T-cell (primary cell): ENCODE measurements at regions of chr3 and their contacts with region 1.

Region 1: GRCh38 chr3:124559881-124560574 is 170.2 kb upstream of the UMPS start:
- DNase-seq: peak in 33 of 35 experiments; percentile 3 to 71 (median 30)
- ATAC-seq: peak; percentile 40 to 71 (median 49)
- H3K4me3 ChIP-seq: no peak overlapping the region
- H3K4me3 Mint-ChIP-seq: no peak overlapping the region
- H3K27ac ChIP-seq: no peak overlapping the region
- H3K27ac Mint-ChIP-seq: no peak overlapping the region
- H3K4me1 ChIP-seq: no peaks in the 10 kb centered on the region
- H3K4me1 Mint-ChIP-seq: no peaks in the 10 kb centered on the region
- H3K27me3 ChIP-seq: peaks cover 0 to 19% of the 10 kb centered on the region in 2 experiments
- H3K27me3 Mint-ChIP-seq: peaks cover 46 to 50% of the 10 kb centered on the region in 2 donors

Region 2: DNA sequence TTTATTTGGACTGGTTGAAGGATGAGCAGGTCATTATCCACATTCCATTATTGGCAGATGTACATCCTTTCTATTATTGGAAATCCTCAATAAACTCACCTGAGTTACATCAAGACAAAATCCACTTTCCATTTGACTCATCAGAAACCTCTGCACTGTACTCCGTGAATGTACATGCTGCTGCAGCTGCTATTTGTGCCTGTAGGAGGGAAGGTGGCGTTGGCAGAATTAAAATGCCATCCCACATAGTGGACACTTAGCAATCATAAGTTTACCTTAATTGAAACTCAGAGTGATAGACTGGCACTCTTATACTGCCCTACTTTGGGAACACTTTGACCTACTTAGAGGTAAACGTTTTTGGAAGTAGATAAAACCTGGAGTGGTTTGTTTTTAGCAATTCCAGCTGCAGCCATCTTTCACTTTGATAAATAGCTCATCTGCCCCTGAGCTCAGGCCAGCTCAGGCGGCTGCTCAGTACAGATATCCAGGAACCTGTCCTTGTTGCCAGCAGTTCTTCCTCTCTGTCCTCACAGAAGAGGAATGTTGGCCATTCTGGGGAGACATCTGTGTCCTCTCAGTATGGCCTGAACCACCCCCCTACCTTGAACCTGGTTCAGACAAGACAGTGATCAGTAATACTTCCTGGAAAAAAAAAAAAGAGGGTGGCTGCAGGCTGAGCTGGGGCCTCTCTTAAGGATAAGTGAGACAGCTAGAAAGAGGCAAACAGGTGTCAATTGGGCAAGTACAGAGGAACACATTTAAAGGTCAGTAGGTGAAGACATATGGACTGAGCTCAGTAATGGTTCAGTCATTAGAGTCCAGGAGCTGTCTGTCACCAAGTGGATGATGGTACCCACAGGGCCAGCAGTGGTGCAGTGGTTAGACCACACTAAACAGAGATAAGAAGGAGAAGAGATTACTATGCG is 16.8 kb after region 1 on chr3:
- CTCF ChIA-PET with region 1: interaction called, 4 to 16 read pairs
- POLR2A ChIA-PET with region 1: no interaction called
- DNase-seq: no peak
- ATAC-seq: no peak
- H3K4me3 ChIP-seq: no peak overlapping the region
- H3K4me3 Mint-ChIP-seq: no peak overlapping the region
- H3K27ac ChIP-seq: no peak overlapping the region
- H3K27ac Mint-ChIP-seq: no peak overlapping the region
- H3K4me1 ChIP-seq: no peaks in the 10 kb centered on the region
- H3K4me1 Mint-ChIP-seq: no peaks in the 10 kb centered on the region
- H3K27me3 ChIP-seq: peaks cover 3 to 5% of the 10 kb centered on the region in 2 experiments
- H3K27me3 Mint-ChIP-seq: peaks cover 5 to 6% of the 10 kb centered on the region in 2 donors

Region 3: DNA sequence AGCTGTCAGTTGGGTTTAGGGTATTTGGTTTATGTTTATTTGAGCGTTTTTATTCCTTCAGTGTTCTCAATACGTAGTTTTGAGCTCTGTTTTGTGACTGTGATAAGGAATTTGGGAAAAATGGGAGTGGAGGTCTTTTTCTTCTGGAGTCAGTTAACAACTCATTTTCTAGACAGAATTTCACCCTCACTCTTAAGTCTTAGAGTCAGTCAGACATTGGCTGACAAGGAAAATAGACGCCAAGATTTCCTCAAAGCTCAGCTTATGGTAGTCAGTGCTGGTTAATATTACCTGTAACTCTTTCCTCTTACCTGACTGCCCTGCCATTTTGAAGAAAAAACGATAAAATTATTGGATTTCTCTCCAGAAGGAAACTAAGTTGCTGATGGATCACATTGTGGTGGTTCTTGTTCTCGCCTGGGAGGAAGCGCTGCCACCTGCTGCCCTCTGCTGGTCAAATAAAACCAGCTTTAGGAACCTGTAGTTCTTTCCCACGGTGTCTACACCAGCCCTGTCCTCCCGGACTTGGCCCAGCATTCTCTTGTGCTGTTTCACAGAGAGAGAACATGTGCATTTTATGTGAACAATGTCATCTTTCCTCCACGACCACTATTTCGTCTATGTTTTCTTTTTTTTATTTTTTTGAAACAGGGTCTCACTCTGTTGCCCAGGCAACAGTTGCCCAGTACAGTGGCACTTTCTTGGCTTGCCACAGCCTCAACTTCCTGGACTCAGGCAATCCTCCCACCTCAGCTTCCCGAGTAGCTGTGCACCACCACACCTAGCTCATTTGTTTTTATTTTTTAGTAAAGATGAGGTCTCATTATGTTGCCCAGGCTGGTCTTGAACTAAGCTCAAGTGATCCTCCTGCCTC is 128.8 kb after region 1 on chr3:
- CTCF ChIA-PET with region 1: interaction called, 7 to 17 read pairs
- POLR2A ChIA-PET with region 1: interaction called in 1 of 2 experiments, 5 read pairs
- DNase-seq: peak; percentile 11 to 80 (median 58)
- ATAC-seq: peak; percentile 65 to 86 (median 75)
- H3K4me3 ChIP-seq: no peak overlapping the region
- H3K4me3 Mint-ChIP-seq: no peak overlapping the region
- H3K27ac ChIP-seq: no peak overlapping the region
- H3K27ac Mint-ChIP-seq: no peak overlapping the region
- H3K4me1 ChIP-seq: peaks cover 0 to 6% of the 10 kb centered on the region in 2 experiments
- H3K4me1 Mint-ChIP-seq: peaks cover 0 to 4% (median 4%) of the 10 kb centered on the region in 3 donors
- H3K27me3 ChIP-seq: peaks cover 0 to 17% of the 10 kb centered on the region in 2 experiments
- H3K27me3 Mint-ChIP-seq: peaks cover 18 to 27% of the 10 kb centered on the region in 2 donors